ENCODE measurements at regions of chr2 and their contacts with region 1.

Region 1: GRCh38 chr2:135531231-135532228 is at the start of gene R3HDM1:
- DNase-seq: peak; percentile 98
- total RNA-seq, gene R3HDM1: 21.2 TPM

Region 2: DNA sequence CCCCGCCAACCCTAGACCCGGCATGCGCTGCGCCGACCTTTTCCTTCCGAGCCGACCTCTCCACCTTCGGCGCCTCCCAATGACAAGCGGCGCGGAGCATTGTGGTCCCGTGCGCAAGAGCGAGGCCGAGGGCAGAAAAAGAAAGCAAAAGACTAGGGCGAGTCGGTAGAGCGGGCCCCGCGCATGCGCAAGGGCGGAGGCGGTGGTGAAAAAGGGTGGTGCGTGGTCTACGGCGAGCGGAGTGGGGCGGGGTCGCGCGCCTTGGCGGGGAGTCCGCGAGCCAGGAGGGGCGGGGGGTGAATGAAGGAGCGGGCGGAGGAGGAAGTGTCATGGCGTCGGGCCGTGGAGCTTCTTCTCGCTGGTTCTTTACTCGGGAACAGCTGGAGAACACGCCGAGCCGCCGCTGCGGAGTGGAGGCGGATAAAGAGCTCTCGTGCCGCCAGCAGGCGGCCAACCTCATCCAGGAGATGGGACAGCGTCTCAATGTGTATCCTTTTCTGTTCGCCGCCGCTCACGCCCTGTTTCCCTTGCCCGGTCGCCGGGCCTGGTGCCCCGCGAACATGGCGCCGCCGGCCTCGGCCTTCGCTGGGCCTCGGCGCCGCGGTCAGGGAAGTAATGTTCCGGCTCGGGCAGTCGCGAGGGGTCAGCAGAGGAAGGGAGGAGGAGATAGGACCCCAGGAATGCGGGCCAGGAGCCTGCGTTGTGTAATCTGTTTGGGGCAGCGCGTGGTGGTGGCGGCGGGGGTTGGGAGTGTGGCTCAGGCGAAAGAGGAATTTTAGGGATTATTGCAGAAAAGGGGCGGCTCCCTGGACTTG is 612.8 kb before region 1 on chr2 and contains the start of gene CCNT2:
- intact Hi-C with region 1: loop called (anchors 10 kb)
- DNase-seq: peak; percentile 100
- total RNA-seq, gene CCNT2: 24.1 TPM

Region 3: DNA sequence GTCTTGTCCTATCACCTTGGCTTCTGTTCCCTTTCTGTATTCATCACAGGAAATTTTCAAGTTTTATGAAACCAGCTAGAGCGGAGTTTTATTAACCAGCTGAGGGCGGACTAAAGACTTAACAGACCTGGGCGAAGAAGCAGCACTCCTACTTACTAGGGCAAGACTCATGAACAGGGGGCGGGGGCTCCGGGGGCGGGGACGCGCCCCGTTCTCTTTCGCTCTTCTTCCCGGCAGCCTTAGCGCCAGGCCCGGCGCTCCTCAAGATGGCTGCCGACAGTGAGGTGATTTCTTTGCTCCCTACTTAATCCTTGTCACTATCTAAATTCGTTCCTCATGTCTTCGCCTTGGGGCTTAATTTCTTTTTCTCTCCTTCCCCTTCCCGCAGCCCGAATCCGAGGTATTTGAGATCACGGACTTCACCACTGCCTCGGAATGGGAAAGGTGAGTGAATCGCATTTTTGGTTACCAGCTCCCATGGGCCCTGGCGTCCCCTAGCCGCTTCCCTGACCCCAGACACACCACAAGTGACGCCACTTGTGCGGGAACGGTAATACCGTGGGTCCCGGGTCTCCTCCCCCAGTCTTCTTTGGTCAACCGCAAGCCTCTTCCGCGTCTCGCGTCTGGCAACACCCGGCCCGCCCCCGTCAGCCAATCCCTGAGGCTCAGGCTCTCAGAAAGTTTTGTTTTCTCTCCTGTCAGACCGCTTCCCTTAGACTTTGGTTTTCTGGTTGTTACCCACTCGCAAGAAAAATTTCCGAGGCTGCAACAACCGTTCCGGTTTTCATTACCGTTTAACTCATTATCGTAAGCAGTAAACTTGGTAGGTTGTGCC is 479.3 kb before region 1 on chr2 and contains the start of gene RAB3GAP1:
- intact Hi-C with region 1: loop called (anchors 10 kb)
- DNase-seq: peak; percentile 89
- total RNA-seq, gene RAB3GAP1: 47.8 TPM

Region 4: DNA sequence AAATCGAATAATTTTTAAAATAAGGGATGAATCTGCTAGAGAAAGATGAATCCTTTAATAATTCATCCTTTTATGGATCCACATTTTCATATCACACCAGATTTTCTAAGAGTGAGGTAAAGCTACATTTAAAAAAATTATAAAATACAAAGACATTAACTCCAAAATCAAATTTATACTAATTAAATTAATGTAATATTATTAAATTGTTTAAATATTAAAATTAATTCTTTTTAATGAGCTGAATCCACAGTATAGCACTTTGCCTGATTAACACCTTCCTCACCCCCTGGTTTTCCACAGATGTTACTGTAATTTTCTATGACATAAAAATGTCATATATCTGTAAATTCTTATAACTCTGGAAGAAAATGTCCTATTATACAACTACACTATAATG is 26.7 kb before region 1 on chr2:
- intact Hi-C with region 1: no loop called
- DNase-seq: no peak

Region 5: GRCh38 chr2:135600915-135601314 is 69.4 kb after region 1 on chr2:
- intact Hi-C with region 1: no loop called
- DNase-seq: no peak

Region 6: GRCh38 chr2:135741395-135742324 is 210.1 kb after region 1 on chr2 and contains the start of gene UBXN4:
- intact Hi-C with region 1: loop called (anchors 2 kb)
- DNase-seq: peak; percentile 98
- total RNA-seq, gene UBXN4: 65.6 TPM